ENCODE measurements at regions of chr4 and their contacts with region 1.

Region 1: GRCh38 chr4:55546756-55547465 is at the start of gene CLOCK:
- DNase-seq: peak; percentile 70 to 88 (median 81)
- H3K4me3 ChIP-seq: peak within 1 kb of the TSS; percentile 63 to 98 (median 92)
- H3K27ac ChIP-seq: peak within 1 kb of the TSS; percentile 88 to 99 (median 98)
- H3K27me3 ChIP-seq: no peaks in the 10 kb centered on the region
- CTCF ChIP-seq: peak in 54 of 56 donors; percentile 16 to 72 (median 51)
- total RNA-seq, gene CLOCK: 24.9 to 52.2 (median 37.5) TPM

Region 2: DNA sequence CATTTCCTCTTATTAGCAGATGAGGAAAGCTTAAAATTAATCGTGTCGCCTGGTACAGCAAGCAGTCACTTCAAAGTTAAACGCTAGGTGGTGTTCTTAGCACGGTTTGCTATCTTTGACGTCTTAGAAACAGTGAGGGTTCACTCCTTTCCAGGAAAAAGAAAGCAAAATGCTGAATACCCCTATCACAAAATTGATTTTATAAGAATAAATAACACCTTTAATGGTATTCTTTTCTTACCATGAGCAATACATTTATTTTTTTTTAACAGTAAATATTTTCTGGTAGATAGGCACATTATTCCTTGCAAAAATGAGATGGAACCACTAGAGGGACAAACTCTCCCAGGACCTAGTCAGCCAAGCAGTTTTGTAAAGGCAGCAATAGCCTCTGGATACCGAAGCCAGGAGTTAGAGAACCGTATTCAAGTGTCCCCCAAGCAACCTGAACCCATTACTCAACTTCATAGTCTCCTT is 575.4 kb before region 1 on chr4:
- intact Hi-C with region 1: loop called in 1 of 2 experiments (anchors 10 kb)
- DNase-seq: no peak
- H3K4me3 ChIP-seq: peak overlapping the region in 9 of 59 donors; percentile 6 to 33 (median 17)
- H3K27ac ChIP-seq: no peak overlapping the region
- H3K27me3 ChIP-seq: peaks cover 0 to 9% (median 0%) of the 10 kb centered on the region in 45 donors
- CTCF ChIP-seq: peak; percentile 62 to 93 (median 78)

Region 3: GRCh38 chr4:55008166-55009070 is 538.5 kb before region 1 on chr4:
- intact Hi-C with region 1: loop called (anchors 10 kb)
- DNase-seq: peak in 1 of 10 donors; percentile 33
- H3K4me3 ChIP-seq: peak overlapping the region in 7 of 59 donors; percentile 9 to 49 (median 24)
- H3K27ac ChIP-seq: peak overlapping the region in 13 of 59 donors; percentile 0 to 74 (median 51)
- H3K27me3 ChIP-seq: peaks cover 0 to 5% (median 0%) of the 10 kb centered on the region in 45 donors
- CTCF ChIP-seq: peak in 41 of 56 donors; percentile 12 to 50 (median 32)

Region 4: DNA sequence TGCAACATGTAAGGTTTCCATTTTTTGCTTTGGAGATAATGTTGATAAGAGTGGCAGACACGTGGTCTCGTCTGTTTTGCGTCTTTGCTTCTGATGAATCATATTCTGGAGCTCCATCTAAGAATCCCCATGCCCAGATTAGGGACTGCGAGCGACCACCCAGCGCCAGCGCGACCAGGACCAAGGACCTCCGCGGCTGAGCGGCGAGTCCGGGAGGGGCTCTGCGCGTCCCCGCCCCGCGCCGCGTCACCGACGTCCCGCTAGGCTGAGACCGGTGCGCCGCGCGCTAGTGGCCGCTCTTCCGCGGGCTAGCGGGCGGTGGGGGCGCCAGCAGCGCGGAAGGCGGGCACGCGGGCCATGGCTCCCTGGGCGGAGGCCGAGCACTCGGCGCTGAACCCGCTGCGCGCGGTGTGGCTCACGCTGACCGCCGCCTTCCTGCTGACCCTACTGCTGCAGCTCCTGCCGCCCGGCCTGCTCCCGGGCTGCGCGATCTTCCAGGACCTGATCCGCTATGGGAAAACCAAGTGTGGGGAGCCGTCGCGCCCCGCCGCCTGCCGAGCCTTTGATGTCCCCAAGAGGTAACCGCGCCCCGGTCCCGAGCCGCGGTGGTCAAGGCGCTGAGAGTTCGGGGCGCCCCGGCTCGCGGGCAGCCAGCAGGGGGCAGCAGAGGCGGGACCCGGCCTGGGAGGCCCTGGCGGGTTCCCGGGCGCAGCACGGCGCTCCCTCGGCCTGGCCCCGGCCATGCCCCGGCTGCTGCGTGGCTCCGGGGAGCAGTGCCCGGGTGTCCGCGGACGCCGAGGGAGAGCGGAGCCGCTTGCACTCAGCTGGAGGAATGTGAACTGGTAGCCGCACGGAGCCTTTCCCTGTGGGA is 200.7 kb before region 1 on chr4 and contains the start of gene SRD5A3:
- intact Hi-C with region 1: loop called (anchors 1 kb)
- DNase-seq: peak; percentile 66 to 91 (median 78)
- H3K4me3 ChIP-seq: peak within 1 kb of the TSS; percentile 59 to 96 (median 82)
- H3K27ac ChIP-seq: peak within 1 kb of the TSS; percentile 86 to 99 (median 98)
- H3K27me3 ChIP-seq: no peaks in the 10 kb centered on the region
- CTCF ChIP-seq: peak; percentile 66 to 99 (median 90)
- total RNA-seq, gene SRD5A3: 6.0 to 34.8 (median 15.9) TPM

Region 5: GRCh38 chr4:55395529-55396307 is 151.2 kb before region 1 on chr4 and contains the start of gene TMEM165:
- intact Hi-C with region 1: loop called (anchors 2 to 5 kb)
- DNase-seq: peak; percentile 76 to 96 (median 90)
- H3K4me3 ChIP-seq: peak within 1 kb of the TSS; percentile 66 to 100 (median 92)
- H3K27ac ChIP-seq: peak within 1 kb of the TSS; percentile 83 to 99 (median 97)
- H3K27me3 ChIP-seq: no peaks in the 10 kb centered on the region
- CTCF ChIP-seq: peak in 28 of 56 donors; percentile 2 to 45 (median 28)
- total RNA-seq, gene TMEM165: 53.1 to 690 (median 173) TPM

Region 6: DNA sequence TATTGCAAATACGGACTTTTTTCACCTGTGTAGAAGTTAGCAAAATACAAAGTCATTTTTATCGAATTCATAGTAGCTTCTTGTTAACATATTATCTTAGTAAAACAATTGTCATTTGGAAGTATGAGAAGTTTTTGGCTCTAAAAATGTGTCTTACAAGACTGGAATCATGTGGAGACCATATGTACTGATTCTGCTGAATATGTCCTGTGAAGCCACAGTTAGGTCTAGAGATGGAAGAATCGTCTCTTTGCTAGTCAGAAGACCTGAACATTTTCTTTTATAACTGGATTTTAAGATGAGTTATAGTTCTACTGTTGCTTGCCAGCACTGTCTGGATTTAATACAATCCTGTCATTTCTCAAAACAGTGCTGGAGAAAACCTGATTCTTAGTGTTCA is 122.1 kb before region 1 on chr4:
- intact Hi-C with region 1: loop called in 1 of 2 experiments (anchors 10 kb)
- DNase-seq: no peak
- H3K4me3 ChIP-seq: no peak overlapping the region
- H3K27ac ChIP-seq: peak overlapping the region in 38 of 59 donors; percentile 1 to 63 (median 21)
- H3K27me3 ChIP-seq: no peaks in the 10 kb centered on the region
- CTCF ChIP-seq: no peak

Region 7: DNA sequence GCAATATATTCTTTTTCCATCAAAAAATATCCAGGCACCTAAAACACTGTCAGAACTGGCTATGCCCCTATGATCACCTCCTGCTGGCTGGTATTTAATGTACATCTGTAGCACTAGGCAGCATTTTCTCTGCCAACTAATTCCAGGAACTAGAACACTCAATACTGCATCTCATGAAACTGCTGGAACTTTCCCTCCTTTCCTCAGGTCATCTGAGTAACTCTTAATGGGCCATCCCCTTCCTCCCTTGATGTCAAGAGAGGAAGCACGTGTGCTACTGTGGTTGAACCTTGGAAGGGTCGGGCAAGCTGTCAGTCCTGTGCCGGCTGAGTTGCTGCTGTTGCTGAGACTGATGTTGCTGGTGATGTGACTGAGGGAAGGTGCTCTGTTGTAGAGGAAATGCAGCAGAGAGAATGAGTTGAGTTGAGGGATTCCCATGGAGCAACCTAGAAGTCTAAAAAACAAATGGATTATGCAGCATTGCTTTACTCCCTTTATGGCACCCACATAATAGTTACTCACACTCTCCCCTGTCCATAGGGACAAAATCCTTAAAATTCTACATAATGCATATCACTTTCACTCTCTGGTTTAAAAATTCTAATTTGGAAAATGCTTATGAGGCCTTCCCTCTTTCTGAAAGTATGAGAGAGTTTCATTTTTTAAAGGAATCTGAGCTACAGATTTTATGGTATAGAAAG is 111.6 kb before region 1 on chr4:
- intact Hi-C with region 1: no loop called
- DNase-seq: no peak
- H3K4me3 ChIP-seq: no peak overlapping the region
- H3K27ac ChIP-seq: peak overlapping the region in 48 of 59 donors; percentile 0 to 82 (median 36)
- H3K27me3 ChIP-seq: no peaks in the 10 kb centered on the region
- CTCF ChIP-seq: no peak

Region 8: DNA sequence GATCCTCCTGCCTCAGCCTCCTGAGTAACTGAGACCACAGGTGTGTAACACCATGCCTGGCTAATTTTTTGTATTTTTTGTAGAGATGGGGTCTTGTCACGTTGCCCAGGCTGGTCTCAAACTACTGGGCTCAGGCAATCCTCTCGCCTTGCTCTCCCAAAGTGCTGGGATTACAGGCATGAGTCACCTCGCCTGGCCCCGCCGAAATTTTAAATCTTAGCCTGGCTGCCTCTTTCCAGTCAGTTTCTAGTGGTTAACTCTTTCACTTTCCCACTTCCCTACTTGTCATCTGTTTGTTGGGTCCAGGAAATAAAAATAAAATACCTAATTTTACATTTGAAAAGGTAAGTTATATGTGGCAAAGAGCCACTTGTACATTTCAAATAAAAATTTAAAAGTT is 88.7 kb before region 1 on chr4:
- intact Hi-C with region 1: no loop called
- DNase-seq: no peak
- H3K4me3 ChIP-seq: no peak overlapping the region
- H3K27ac ChIP-seq: no peak overlapping the region
- H3K27me3 ChIP-seq: no peaks in the 10 kb centered on the region
- CTCF ChIP-seq: no peak

Region 9: DNA sequence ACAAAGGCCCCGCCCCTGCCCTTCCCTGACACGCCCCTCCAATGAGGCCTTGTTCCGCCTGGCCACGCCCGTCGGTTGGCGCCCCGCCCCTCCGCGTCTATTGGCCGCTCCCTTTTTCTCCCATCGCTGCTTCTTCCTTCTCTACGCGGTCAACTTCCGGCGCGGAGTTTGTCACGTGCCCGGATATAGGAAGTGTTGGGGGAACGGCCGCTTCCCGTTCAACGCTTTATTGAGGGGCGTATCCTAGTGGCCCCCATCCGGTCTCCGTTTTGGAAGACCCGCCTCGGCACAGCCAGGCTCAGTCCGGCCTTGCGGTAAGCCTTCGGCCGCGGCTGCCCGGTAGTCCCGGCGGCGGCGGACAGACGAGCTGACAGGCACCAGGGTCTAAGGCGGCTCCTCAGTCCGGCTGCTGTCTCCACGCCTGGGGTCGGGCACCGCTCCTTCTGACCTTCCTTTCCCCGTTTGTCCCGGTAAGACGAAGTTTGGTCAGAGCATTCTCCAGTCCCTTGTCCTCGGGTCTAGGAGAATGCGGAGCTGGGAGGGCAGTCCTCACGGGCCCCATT is 306.7 kb after region 1 on chr4 and contains the start of gene EXOC1:
- intact Hi-C with region 1: loop called (anchors 2 to 10 kb)
- DNase-seq: peak; percentile 97 to 99 (median 98)
- H3K4me3 ChIP-seq: peak within 1 kb of the TSS; percentile 65 to 100 (median 93)
- H3K27ac ChIP-seq: peak within 1 kb of the TSS in 42 of 59 donors; percentile 2 to 85 (median 60)
- H3K27me3 ChIP-seq: peaks cover 0 to 12% (median 0%) of the 10 kb centered on the region in 45 donors
- CTCF ChIP-seq: peak in 19 of 56 donors; percentile 8 to 51 (median 28)
- total RNA-seq, gene EXOC1: 22.0 to 65.5 (median 49.2) TPM

Region 10: DNA sequence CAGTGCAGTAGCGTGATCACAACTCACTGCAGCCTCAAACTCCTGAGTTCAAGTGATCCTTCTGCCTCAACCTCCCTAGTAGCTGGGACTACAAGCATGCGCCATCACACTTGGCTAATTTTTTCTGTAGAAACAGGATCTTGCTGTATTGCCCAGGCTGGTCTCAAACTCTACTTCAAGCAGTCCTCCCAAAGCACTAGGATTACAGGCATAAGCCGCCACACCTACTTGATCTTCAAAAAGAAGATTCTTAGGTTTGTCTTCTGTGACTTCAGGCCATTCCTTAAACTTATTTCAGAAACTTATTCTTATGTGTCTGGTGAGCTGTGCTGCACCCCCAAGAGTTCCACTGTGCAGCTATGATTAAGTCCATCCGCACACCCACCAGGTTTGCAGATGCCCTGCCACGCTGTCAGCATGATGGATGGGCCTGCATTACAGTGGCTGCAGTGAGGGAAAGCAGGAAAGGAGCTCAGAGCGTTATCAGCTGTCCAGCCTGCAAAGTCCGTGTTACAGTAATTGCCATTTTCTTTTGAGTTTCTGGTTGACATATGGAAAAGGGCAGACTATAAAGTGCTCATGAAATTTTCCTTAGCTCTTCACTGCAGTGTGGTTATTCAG is 693.8 kb after region 1 on chr4:
- intact Hi-C with region 1: no loop called
- DNase-seq: no peak
- H3K4me3 ChIP-seq: no peak overlapping the region
- H3K27ac ChIP-seq: no peak overlapping the region
- H3K27me3 ChIP-seq: no peaks in the 10 kb centered on the region
- CTCF ChIP-seq: no peak